CD8-positive, alpha-beta memory T cell (primary cell): ENCODE measurements at regions of chr2 and their contacts with region 1.

Region 1: GRCh38 chr2:68943581-68944568 is 8.8 kb downstream of the GKN2 start:
- DNase-seq: peak; percentile 24 to 59 (median 37)
- H3K4me3 ChIP-seq: no peak overlapping the region
- H3K4me3 Mint-ChIP-seq: no peak overlapping the region
- H3K27ac ChIP-seq: no peak overlapping the region
- H3K27ac Mint-ChIP-seq: peak overlapping the region in 1 of 8 donors; percentile 33
- H3K4me1 ChIP-seq: no peaks in the 10 kb centered on the region
- H3K4me1 Mint-ChIP-seq: peaks cover 0 to 4% (median 4%) of the 10 kb centered on the region in 3 donors
- H3K27me3 ChIP-seq: peaks cover 12% of the 10 kb centered on the region
- H3K27me3 Mint-ChIP-seq: peaks cover 33 to 61% of the 10 kb centered on the region in 2 donors

Region 2: DNA sequence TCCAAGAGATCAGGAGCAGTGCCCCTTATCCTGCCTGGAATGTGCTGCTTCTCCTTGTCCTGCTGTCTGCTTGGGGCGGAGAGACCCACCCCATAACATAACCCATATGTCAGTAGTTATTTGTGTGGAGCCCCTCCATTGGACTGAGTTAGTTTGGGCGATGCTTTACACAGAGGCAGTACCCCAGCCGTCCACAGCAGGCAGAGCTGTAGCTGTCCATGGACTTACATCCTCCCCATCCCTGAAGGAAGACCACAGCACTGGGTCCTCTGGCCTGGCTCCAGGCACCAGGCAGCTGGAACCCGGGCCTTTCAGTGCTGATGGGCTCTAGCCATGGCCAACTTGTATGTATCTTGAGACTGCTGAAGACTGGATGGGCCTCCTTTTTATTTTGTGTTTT is 11.5 kb before region 1 on chr2:
- CTCF ChIA-PET with region 1: interaction called, 21 read pairs
- POLR2A ChIA-PET with region 1: no interaction called
- DNase-seq: no peak
- H3K4me3 ChIP-seq: no peak overlapping the region
- H3K4me3 Mint-ChIP-seq: no peak overlapping the region
- H3K27ac ChIP-seq: no peak overlapping the region
- H3K27ac Mint-ChIP-seq: no peak overlapping the region
- H3K4me1 ChIP-seq: no peaks in the 10 kb centered on the region
- H3K4me1 Mint-ChIP-seq: no peaks in the 10 kb centered on the region
- H3K27me3 ChIP-seq: no peaks in the 10 kb centered on the region
- H3K27me3 Mint-ChIP-seq: peaks cover 13 to 27% of the 10 kb centered on the region in 2 donors

Region 3: GRCh38 chr2:68959001-68959400 is 15.1 kb after region 1 on chr2:
- CTCF ChIA-PET with region 1: interaction called, 10 read pairs
- POLR2A ChIA-PET with region 1: no interaction called
- DNase-seq: no peak
- H3K4me3 ChIP-seq: no peak overlapping the region
- H3K4me3 Mint-ChIP-seq: no peak overlapping the region
- H3K27ac ChIP-seq: no peak overlapping the region
- H3K27ac Mint-ChIP-seq: no peak overlapping the region
- H3K4me1 ChIP-seq: no peaks in the 10 kb centered on the region
- H3K4me1 Mint-ChIP-seq: no peaks in the 10 kb centered on the region
- H3K27me3 ChIP-seq: no peaks in the 10 kb centered on the region
- H3K27me3 Mint-ChIP-seq: peaks cover 10 to 39% of the 10 kb centered on the region in 2 donors